IMR-90 (cell line): ENCODE measurements at regions of chr7 and their contacts with region 1.

Region 1: DNA sequence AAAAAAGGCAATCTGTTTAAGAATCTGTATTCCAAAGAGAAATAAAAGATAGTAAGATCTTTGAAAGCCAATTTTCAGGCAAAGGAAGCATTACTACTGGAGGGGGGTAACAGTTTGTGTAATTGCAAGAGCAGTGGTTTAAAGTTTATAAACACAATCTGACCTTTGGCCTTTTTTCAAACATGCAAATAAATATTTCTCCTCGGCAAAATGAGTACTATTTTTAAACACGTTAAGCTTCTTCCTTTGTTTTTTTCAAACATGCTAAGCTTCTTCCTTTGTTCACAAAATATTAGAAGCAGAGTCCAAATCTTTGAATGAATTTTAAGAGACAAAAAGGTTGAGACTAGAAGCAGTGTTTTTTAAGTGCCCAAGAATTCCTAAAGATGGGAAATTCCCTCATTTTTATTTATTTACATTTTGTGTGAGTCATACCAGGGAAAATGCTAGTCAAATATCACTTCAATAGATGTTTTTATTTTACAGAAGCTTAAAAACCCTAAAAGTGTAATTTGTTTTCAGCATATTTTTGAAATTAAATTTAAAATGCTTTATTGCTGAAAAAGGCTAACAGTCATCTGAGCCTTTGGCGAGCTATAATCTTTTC is 229.3 kb downstream of the GPR37 start:
- DNase-seq: peak; percentile 59
- ATAC-seq: peak; percentile 48
- H3K4me3 ChIP-seq: no peak overlapping the region
- H3K27ac ChIP-seq: 0 out of 2 replicates have a peak overlapping the region, but pooled peaks have one; percentile 41
- H3K4me1 ChIP-seq: peaks cover 7% of the 10 kb centered on the region
- H3K27me3 ChIP-seq: no peaks in the 10 kb centered on the region
- CTCF ChIP-seq: no peak
- POLR2A ChIP-seq: no peak
- RAD21 ChIP-seq: no peak

Region 2: DNA sequence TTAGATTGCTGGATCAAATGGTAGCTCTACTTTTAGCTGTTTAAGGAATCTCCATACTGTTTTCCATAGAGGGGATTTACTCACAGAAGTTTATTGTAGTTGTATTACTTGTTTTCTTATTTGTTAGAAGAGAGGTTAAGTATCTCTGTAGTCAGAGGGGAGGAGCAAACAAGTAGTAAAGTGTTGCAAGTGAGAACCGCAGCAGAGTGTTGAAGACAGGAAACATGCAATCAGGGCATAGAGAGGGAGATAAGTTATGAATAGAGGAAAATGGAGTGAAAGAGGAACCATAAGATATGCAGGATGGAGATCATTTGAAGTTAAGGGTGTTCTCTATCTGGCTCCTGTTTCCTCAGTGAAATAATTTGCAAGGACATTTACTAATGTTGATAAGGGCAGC is 172.0 kb before region 1 on chr7:
- CTCF ChIA-PET with region 1: no interaction called
- POLR2A ChIA-PET with region 1: no interaction called
- dilution Hi-C with region 1: no loop called
- in situ Hi-C with region 1: no loop called
- intact Hi-C with region 1: no loop called
- DNase-seq: no peak
- ATAC-seq: no peak
- H3K4me3 ChIP-seq: no peak overlapping the region
- H3K27ac ChIP-seq: no peak overlapping the region
- H3K4me1 ChIP-seq: no peaks in the 10 kb centered on the region
- H3K27me3 ChIP-seq: no peaks in the 10 kb centered on the region
- CTCF ChIP-seq: no peak
- POLR2A ChIP-seq: no peak
- RAD21 ChIP-seq: no peak

Region 3: DNA sequence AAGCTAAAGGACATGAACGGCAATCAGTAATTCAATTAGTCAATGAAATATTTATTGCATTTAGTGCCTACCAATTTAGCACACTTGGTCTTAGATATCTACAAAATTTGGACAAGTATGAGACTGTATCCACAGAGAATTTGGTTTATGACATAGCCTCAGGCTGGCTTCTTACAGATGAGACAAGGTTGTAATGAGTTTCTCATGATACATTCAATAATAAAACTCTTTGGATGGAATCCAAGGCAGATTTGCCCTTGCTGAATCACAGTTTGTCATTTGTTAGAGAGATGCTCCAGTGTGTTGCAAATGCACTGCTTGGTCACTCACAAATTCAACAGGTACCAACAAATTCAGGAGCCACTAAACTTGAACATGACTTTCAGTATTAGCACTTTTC is 66.8 kb after region 1 on chr7:
- CTCF ChIA-PET with region 1: no interaction called
- POLR2A ChIA-PET with region 1: no interaction called
- dilution Hi-C with region 1: no loop called
- in situ Hi-C with region 1: no loop called
- intact Hi-C with region 1: no loop called
- DNase-seq: peak; percentile 47
- ATAC-seq: peak; percentile 17; the same call in 1 of the 2 replicates
- H3K4me3 ChIP-seq: no peak overlapping the region
- H3K27ac ChIP-seq: no peak overlapping the region
- H3K4me1 ChIP-seq: no peaks in the 10 kb centered on the region
- H3K27me3 ChIP-seq: no peaks in the 10 kb centered on the region
- CTCF ChIP-seq: no peak
- POLR2A ChIP-seq: no peak
- RAD21 ChIP-seq: no peak

Region 4: DNA sequence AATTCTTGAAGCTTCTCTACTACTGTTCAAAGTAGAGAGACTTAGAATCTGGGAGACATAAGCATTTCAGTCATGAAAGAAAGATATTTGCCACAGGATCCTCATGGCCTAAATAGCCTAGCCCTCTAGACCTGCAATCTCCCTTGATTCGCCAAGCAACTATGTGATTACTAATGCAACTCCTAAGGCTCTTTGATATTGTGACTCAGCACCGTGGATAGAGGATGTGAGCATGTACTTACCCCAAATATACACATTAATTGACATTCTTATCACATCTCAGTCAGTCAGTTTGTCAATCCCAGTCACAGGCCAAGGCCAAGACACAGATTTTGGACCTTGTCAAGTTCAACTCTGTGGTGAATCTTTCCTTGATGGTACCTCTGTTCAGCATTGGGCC is 186.8 kb after region 1 on chr7:
- CTCF ChIA-PET with region 1: no interaction called
- POLR2A ChIA-PET with region 1: no interaction called
- dilution Hi-C with region 1: no loop called
- in situ Hi-C with region 1: no loop called
- intact Hi-C with region 1: loop called (anchors 10 kb)
- DNase-seq: peak; percentile 88
- ATAC-seq: peak; percentile 65
- H3K4me3 ChIP-seq: no peak overlapping the region
- H3K27ac ChIP-seq: no peak overlapping the region
- H3K4me1 ChIP-seq: peaks cover 5% of the 10 kb centered on the region
- H3K27me3 ChIP-seq: no peaks in the 10 kb centered on the region
- CTCF ChIP-seq: no peak
- POLR2A ChIP-seq: no peak
- RAD21 ChIP-seq: no peak